Cardiac septum (tissue), 1 donor: ENCODE measurements at regions of chr9 and their contacts with region 1.

Region 1: DNA sequence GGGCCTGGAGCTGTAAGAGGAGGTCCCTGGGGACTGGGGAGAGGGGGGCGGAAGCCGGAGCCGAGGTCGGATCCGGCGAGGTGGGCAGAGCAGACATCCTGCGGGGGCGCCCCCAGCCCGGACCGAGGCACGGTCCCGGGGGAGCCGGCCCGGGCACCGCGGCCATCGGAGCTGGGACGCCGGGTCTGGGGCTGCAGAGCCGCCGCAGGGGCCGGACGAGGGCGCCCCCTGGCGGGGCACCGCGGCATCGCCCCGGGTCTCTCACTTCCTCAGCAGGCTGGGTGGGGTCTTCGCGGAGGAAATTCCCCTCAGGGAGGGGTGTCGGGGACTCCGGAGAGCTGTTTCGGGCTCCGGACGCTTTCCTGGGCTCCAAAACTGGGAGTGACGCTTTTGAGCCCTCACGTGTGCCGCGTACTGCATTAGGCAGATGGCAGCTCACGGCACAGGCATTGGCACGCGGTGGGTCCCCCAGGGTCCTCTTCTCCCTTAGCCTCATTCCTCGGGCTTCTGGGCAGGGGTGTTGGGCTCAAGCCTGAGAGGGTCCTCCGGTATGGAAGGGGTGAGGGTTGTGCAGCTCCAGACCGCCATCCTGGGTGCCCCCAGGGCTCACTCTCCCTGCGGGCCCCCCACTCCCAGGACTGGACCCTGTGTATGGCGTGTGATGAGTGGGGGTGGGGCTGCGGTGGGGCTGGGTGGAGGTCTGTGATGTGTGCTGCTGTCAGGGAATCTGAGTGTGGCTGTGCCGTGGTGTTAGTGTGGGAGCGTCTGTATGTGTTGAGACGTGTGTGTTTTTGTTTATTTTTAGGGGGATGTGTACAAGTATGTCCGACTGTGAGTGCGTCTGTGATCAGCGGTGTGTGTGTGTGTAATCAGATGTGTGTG is 29.6 kb downstream of the LHX2 start:
- DNase-seq: no peak

Region 2: DNA sequence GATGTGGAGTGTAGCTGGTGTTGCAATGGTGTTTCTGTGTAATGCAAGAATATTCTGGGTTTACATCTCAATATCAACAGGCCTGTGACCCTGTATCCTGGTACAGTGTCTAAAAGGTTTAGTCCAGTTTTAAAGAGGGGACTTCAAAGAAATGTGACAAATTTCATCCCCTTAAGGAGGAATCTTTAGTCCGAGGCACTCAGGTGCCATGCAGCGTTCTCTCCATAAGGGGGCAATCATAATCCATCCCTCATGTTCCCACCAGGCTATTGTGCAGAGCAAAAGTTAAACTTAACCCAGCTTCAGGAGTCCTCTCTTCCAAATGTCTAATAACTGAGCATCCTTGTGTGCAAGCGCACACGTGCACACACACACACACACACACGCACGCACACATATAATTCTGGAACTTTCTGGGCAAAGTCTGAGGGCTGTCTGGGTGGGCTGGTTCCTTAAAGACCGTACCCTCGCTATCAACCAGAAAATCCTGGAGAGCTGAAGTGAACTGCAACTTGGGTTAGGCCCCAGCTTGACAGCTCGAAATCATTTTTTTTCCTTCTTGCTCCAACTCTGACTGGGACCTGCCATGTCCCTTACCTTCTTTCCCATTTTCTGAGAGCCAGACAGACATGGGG is 639.2 kb before region 1 on chr9:
- intact Hi-C with region 1: loop called (anchors 2 kb)
- DNase-seq: no peak

Region 3: GRCh38 chr9:123541411-123541810 is 499.8 kb before region 1 on chr9:
- intact Hi-C with region 1: loop called (anchors 2 kb)
- DNase-seq: no peak

Region 4: DNA sequence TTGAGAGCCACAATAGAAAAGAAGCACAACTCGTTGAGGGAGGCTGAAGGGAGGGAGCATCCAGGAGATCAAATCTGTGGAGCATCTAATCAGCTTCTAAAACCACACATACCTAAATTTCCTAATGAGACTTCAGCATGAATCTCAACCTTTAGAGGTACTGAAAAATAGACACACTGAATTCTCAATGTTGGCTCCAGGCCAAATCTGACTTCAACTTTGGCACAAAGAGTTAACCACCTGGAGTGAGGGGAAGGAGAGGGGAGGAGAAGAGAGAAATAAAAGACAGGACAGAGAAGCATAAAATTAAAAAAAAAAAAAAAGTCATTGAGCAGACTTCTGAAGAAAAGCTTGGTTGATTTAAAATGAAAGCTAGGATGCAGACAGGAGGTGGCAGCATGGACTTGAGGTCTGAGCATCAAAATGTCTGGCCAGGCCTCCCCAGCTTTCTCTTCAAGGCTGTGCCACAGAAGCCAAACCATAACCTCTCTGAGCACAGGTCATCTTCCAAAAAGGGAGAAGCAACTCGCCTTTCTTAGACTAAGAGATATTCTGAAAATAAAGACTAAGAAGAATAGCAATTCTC is 316.9 kb before region 1 on chr9:
- intact Hi-C with region 1: loop called (anchors 10 kb)
- DNase-seq: no peak

Region 5: DNA sequence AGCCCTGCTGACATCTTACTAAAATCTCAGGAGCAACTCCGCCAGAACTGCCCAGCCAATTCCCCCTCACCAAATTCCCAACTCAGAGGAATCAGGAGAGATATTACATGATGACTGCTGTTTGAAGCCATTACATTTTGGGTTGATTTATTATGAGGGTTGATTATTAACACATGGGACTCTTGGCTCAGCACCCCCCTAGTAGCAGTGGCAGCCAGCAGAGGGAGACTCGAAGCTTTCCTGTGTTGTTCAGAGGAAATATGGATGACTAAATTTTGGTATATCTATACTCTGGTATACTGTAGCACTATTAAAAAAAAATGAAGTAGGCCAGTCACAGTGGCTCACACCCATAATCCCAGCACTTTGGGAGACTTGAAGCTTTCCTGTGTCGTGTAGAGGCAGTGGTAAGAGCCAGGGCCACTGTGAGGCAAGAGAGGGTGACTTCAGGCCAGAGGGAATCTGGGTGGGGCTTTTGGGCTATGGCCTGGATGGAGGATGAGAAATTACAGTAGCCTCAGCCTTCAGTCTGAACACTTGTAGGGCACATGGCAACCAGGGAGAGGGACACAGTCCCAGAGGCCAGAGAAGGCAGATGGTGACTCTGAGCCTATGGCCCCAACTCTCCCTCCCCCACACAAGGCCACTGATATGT is 81.8 kb after region 1 on chr9:
- intact Hi-C with region 1: no loop called
- DNase-seq: no peak